Activated CD4-positive, alpha-beta T cell treated with anti-CD3 and anti-CD28 coated beads, Interleukin-2, amount 10 ng/mL, durations not matched to agents 24 days and 14 days (primary cell): ENCODE measurements at regions of chr16 and their contacts with region 1.

Region 1: GRCh38 chr16:78705694-78706093 is 606.2 kb downstream of the WWOX start:
- DNase-seq: peak; percentile 65
- H3K4me3 Mint-ChIP-seq: no peak overlapping the region
- H3K27ac Mint-ChIP-seq: no peak overlapping the region
- H3K4me1 Mint-ChIP-seq: peaks cover 5% of the 10 kb centered on the region
- H3K27me3 Mint-ChIP-seq: peaks cover 4% of the 10 kb centered on the region

Region 2: GRCh38 chr16:78742501-78743283 is 37.0 kb after region 1 on chr16:
- intact Hi-C with region 1: loop called (anchors 2 kb)
- DNase-seq: peak; percentile 91
- H3K4me3 Mint-ChIP-seq: peak overlapping the region; percentile 66
- H3K27ac Mint-ChIP-seq: peak overlapping the region; percentile 87
- H3K4me1 Mint-ChIP-seq: peaks cover 18% of the 10 kb centered on the region
- H3K27me3 Mint-ChIP-seq: no peaks in the 10 kb centered on the region

Region 3: GRCh38 chr16:78896280-78896679 is 190.6 kb after region 1 on chr16:
- intact Hi-C with region 1: loop called (anchors 5 kb)
- DNase-seq: no peak
- H3K4me3 Mint-ChIP-seq: no peak overlapping the region
- H3K27ac Mint-ChIP-seq: peak overlapping the region; percentile 56
- H3K4me1 Mint-ChIP-seq: peaks cover 33% of the 10 kb centered on the region
- H3K27me3 Mint-ChIP-seq: peaks cover 2% of the 10 kb centered on the region

Region 4: GRCh38 chr16:79770244-79771064 is 1064.8 kb after region 1 on chr16:
- intact Hi-C with region 1: loop called (anchors 10 kb)
- DNase-seq: peak; percentile 93
- H3K4me3 Mint-ChIP-seq: peak overlapping the region; percentile 97
- H3K27ac Mint-ChIP-seq: peak overlapping the region; percentile 90
- H3K4me1 Mint-ChIP-seq: peaks cover 32% of the 10 kb centered on the region
- H3K27me3 Mint-ChIP-seq: peaks cover 26% of the 10 kb centered on the region

Region 5: DNA sequence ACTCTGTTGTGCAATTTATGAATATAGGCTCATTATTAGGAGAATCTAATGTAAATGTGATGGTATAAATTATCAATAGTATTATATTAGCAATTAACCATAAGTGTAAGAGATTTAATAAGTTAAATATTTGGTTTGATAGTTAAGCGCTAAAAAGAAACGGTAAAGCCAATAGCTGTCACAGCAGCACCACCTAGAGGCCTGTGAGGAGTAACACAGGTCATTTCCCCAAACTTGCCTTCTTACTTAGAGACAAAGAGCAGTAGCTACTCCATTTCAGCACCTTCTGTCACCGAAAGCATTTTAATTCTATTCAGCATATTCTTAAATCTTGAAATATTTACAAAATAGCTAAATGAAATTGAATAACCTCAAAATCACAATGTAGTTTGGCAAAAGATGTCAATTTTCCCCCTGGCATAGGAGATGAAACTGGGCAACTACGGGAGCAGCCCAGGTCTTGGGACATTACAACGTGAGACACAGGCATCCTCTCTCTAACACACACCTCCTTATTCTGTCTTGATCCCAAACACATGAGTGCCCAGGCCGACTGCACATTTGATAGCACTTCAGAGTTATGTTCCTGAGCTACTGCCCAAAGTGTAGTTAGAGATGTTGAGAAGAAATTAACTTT is 1820.8 kb after region 1 on chr16:
- intact Hi-C with region 1: loop called (anchors 5 kb)
- DNase-seq: peak; percentile 88
- H3K4me3 Mint-ChIP-seq: no peak overlapping the region
- H3K27ac Mint-ChIP-seq: peak overlapping the region; percentile 17
- H3K4me1 Mint-ChIP-seq: peaks cover 15% of the 10 kb centered on the region
- H3K27me3 Mint-ChIP-seq: peaks cover 11% of the 10 kb centered on the region